GM12878 (cell line): ENCODE measurements at regions of chr6 and their contacts with region 1.

Region 1: GRCh38 chr6:36131511-36132245 is 1.4 kb downstream of the MAPK13 start:
- DNase-seq: peak; percentile 92
- ATAC-seq: peak; percentile 80
- H3K4me3 ChIP-seq: peak overlapping the region; percentile 46; the same call in 1 of the 2 replicates
- H3K27ac ChIP-seq: no peak overlapping the region; the same call in 1 of the 2 replicates
- H3K4me1 ChIP-seq: peaks cover 30% of the 10 kb centered on the region
- H3K27me3 ChIP-seq: no peaks in the 10 kb centered on the region
- CTCF ChIP-seq: no peak; a peak in 1 of 6 replicates
- EP300 ChIP-seq: 0 out of 4 replicates have a peak, but pooled peaks of 1 of the 2 experiments have one; percentile 9
- POLR2A ChIP-seq: no peak
- RAD21 ChIP-seq: no peak

Region 2: GRCh38 chr6:36114798-36115408 is 16.8 kb before region 1 on chr6:
- CTCF ChIA-PET with region 1: interaction called, 5 read pairs
- POLR2A ChIA-PET with region 1: interaction called, 12 read pairs
- RAD21 ChIA-PET with region 1: interaction called, 9 read pairs
- SMC1A ChIA-PET with region 1: interaction called, 4 read pairs
- in situ Hi-C with region 1: no loop called
- intact Hi-C with region 1: no loop called
- DNase-seq: peak; percentile 60
- ATAC-seq: peak; percentile 76
- H3K4me3 ChIP-seq: peak overlapping the region; percentile 18; the same call in 1 of the 2 replicates
- H3K27ac ChIP-seq: peak overlapping the region; percentile 63
- H3K4me1 ChIP-seq: peaks cover 43% of the 10 kb centered on the region
- H3K27me3 ChIP-seq: no peaks in the 10 kb centered on the region
- CTCF ChIP-seq: no peak
- EP300 ChIP-seq: peak; percentile 62 to 77; a peak in 3 of 4 replicates
- POLR2A ChIP-seq: no peak
- RAD21 ChIP-seq: no peak

Region 3: GRCh38 chr6:36171573-36171972 is 39.9 kb after region 1 on chr6:
- CTCF ChIA-PET with region 1: interaction called, 3 read pairs
- POLR2A ChIA-PET with region 1: interaction called, 3 read pairs
- RAD21 ChIA-PET with region 1: no interaction called
- SMC1A ChIA-PET with region 1: interaction called, 10 read pairs
- in situ Hi-C with region 1: no loop called
- intact Hi-C with region 1: no loop called
- DNase-seq: no peak
- ATAC-seq: peak; percentile 71
- H3K4me3 ChIP-seq: no peak overlapping the region
- H3K27ac ChIP-seq: no peak overlapping the region
- H3K4me1 ChIP-seq: peaks cover 14% of the 10 kb centered on the region
- H3K27me3 ChIP-seq: no peaks in the 10 kb centered on the region
- CTCF ChIP-seq: no peak
- EP300 ChIP-seq: no peak
- POLR2A ChIP-seq: no peak
- RAD21 ChIP-seq: no peak

Region 4: DNA sequence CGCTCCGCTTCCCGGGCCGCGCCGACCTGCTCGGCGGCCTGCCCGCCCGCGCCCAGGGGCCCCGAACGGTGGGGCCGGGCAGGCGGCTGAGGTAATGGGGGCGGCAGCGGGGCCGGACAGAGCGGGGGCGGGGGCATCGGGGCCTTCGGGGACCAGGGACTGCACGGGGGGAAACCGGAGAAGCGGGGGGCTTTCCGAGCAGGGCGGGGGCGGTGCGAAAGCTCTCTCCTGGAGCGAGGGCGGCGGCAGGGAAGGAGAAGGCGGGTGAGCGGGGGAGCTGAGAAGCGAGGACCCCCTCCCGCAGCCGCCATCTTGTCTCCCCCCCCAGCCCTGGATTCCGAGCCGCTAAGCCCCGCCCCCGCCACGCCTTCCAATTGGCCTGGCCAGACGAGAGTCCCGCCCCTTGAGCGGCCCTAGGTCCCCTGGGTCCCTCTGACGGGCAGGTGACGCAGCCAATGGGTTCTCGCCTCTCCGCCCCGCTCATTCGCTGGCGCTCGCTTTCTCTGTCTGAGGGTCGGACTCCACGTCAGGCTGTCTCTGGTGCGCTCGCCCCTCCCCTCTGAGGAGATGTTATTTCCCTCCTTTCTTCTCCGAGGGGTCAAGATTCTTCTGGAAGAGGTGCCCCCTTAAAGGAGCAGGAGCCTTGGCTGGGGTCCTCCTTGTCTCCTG is 65.3 kb after region 1 on chr6:
- CTCF ChIA-PET with region 1: interaction called, 22 read pairs
- POLR2A ChIA-PET with region 1: interaction called, 5 read pairs
- RAD21 ChIA-PET with region 1: interaction called, 19 read pairs
- SMC1A ChIA-PET with region 1: interaction called, 27 read pairs
- in situ Hi-C with region 1: no loop called
- intact Hi-C with region 1: no loop called
- DNase-seq: peak; percentile 88
- ATAC-seq: peak; percentile 97
- H3K4me3 ChIP-seq: peak overlapping the region; percentile 79
- H3K27ac ChIP-seq: peak overlapping the region; percentile 64
- H3K4me1 ChIP-seq: peaks cover 5% of the 10 kb centered on the region; the same call in 1 of the 2 replicates
- H3K27me3 ChIP-seq: no peaks in the 10 kb centered on the region
- CTCF ChIP-seq: no peak
- EP300 ChIP-seq: no peak
- POLR2A ChIP-seq: peak; percentile 79
- RAD21 ChIP-seq: no peak

Region 5: GRCh38 chr6:36204068-36204753 is 72.5 kb after region 1 on chr6:
- CTCF ChIA-PET with region 1: no interaction called
- POLR2A ChIA-PET with region 1: interaction called, 3 read pairs
- RAD21 ChIA-PET with region 1: interaction called, 5 read pairs
- SMC1A ChIA-PET with region 1: interaction called, 10 read pairs
- in situ Hi-C with region 1: no loop called
- intact Hi-C with region 1: no loop called
- DNase-seq: peak; percentile 27
- ATAC-seq: peak; percentile 91
- H3K4me3 ChIP-seq: 0 out of 2 replicates have a peak overlapping the region, but pooled peaks have one; percentile 6
- H3K27ac ChIP-seq: no peak overlapping the region
- H3K4me1 ChIP-seq: peaks cover 12% of the 10 kb centered on the region
- H3K27me3 ChIP-seq: no peaks in the 10 kb centered on the region
- CTCF ChIP-seq: no peak
- EP300 ChIP-seq: no peak
- POLR2A ChIP-seq: no peak
- RAD21 ChIP-seq: no peak

Region 6: DNA sequence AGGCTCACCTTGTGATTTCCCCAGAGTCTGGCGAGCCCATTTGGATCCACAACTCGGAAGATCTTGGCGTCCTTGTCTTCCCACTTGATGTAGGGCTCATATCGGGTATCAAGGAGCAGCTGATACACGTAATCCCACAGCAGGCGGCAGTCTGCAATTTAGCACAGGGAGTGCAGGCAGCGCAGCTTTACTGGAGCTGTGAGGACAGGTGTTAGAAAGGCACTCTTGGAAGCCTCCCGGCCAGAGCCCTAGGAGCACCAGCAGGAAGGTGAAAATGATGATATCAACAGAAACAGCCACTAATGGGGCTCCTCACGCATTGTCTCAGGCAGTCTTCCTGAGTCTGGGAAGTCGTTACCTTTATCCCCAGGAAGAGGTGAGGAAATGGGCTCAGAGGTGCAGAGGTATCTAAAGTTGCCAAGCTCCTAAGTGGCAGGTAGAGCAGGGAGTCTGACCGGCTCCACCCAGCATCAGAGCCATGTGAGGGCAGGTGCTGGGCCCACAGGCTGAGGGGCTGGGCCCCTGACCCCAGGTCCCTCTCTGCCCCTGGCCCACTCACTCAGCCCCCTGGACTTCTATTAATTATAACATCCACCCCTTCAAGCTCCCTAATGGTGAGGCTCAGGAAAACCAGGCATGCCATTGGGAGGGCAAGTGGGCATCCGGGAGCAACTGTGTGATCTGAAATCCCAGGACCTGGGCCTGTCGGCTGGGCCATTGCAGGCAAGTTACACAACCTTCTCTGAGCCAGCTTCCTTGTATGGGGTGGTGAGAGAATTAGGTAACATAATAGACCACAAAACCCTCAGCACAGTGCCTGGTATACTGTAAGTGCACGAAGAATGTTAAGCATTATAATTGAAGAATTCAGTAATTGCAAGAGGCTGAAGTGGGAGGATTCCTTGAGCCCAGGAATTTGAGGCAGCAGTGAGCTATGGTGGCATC is 237.5 kb after region 1 on chr6:
- CTCF ChIA-PET with region 1: no interaction called
- POLR2A ChIA-PET with region 1: no interaction called
- RAD21 ChIA-PET with region 1: no interaction called
- SMC1A ChIA-PET with region 1: no interaction called
- in situ Hi-C with region 1: no loop called
- intact Hi-C with region 1: no loop called
- DNase-seq: no peak
- ATAC-seq: no peak
- H3K4me3 ChIP-seq: no peak overlapping the region
- H3K27ac ChIP-seq: no peak overlapping the region
- H3K4me1 ChIP-seq: peaks cover 26% of the 10 kb centered on the region
- H3K27me3 ChIP-seq: no peaks in the 10 kb centered on the region
- CTCF ChIP-seq: no peak
- EP300 ChIP-seq: no peak
- POLR2A ChIP-seq: no peak
- RAD21 ChIP-seq: no peak